ENCODE measurements at regions of chr4 and their contacts with region 1.

Region 1: GRCh38 chr4:26257850-26258249 is 63.0 kb upstream of the RBPJ start:
- DNase-seq: no peak
- H3K4me3 Mint-ChIP-seq: no peak overlapping the region
- H3K27ac Mint-ChIP-seq: no peak overlapping the region
- H3K4me1 Mint-ChIP-seq: peaks cover 2% of the 10 kb centered on the region
- H3K27me3 Mint-ChIP-seq: no peaks in the 10 kb centered on the region

Region 2: GRCh38 chr4:26273616-26273980 is 15.7 kb after region 1 on chr4:
- intact Hi-C with region 1: loop called (anchors 2 kb)
- DNase-seq: no peak
- H3K4me3 Mint-ChIP-seq: peak overlapping the region; percentile 5
- H3K27ac Mint-ChIP-seq: peak overlapping the region; percentile 42
- H3K4me1 Mint-ChIP-seq: peaks cover 26% of the 10 kb centered on the region
- H3K27me3 Mint-ChIP-seq: no peaks in the 10 kb centered on the region

Measured in activated CD4-positive, alpha-beta T cell treated with anti-CD3 and anti-CD28 coated beads, Interleukin-2, amount 10 ng/mL, durations not matched to agents 24 days and 14 days (primary cell).